ENCODE measurements at regions of chr2 and their contacts with region 1.

Region 1: GRCh38 chr2:9142551-9143263 is 63.9 kb upstream of the ASAP2 start:
- DNase-seq: peak; percentile 84 to 89
- H3K4me3 ChIP-seq: no peak overlapping the region
- H3K27ac ChIP-seq: peak overlapping the region in 2 of 3 donors; percentile 8 to 46
- H3K4me1 ChIP-seq: peaks cover 0 to 23% of the 10 kb centered on the region in 2 donors
- H3K27me3 ChIP-seq: no peaks in the 10 kb centered on the region
- CTCF ChIP-seq: peak; percentile 94 to 99 (median 98)
- POLR2A ChIP-seq: no peak

Region 2: DNA sequence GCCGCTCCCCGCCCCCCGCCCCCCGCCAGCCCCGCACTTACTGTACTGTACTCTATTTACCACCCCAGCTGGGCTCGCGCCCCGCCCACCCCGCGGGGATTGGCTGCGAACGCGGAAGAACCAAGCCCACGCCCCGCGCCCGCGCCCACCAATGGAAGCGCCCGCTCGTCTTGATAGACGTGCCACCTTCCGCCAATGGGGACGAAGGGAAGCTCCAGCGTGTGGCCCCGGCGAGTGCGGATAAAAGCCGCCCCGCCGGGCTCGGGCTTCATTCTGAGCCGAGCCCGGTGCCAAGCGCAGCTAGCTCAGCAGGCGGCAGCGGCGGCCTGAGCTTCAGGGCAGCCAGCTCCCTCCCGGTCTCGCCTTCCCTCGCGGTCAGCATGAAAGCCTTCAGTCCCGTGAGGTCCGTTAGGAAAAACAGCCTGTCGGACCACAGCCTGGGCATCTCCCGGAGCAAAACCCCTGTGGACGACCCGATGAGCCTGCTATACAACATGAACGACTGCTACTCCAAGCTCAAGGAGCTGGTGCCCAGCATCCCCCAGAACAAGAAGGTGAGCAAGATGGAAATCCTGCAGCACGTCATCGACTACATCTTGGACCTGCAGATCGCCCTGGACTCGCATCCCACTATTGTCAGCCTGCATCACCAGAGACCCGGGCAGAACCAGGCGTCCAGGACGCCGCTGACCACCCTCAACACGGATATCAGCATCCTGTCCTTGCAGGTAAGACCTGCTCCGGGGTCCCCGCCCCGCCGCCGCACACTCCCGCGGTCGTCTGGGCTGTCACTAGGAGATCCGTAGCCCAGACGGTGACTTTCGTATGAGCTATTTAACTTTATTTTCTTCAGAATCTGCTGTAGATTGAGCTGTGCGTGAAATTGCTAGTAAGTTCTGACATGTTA is 460.7 kb before region 1 on chr2 and contains the start of gene ID2:
- intact Hi-C with region 1: no loop called
- DNase-seq: peak; percentile 99
- H3K4me3 ChIP-seq: peak within 1 kb of the TSS; percentile 39 to 99 (median 73)
- H3K27ac ChIP-seq: peak within 1 kb of the TSS; percentile 99 to 100 (median 100)
- H3K4me1 ChIP-seq: peaks cover 23 to 27% of the 10 kb centered on the region in 2 donors
- H3K27me3 ChIP-seq: no peaks in the 10 kb centered on the region
- CTCF ChIP-seq: peak in 1 of 6 experiments; percentile 7
- POLR2A ChIP-seq: peak; percentile 100
- total RNA-seq, gene ID2: 226 to 298 (median 247) TPM

Region 3: DNA sequence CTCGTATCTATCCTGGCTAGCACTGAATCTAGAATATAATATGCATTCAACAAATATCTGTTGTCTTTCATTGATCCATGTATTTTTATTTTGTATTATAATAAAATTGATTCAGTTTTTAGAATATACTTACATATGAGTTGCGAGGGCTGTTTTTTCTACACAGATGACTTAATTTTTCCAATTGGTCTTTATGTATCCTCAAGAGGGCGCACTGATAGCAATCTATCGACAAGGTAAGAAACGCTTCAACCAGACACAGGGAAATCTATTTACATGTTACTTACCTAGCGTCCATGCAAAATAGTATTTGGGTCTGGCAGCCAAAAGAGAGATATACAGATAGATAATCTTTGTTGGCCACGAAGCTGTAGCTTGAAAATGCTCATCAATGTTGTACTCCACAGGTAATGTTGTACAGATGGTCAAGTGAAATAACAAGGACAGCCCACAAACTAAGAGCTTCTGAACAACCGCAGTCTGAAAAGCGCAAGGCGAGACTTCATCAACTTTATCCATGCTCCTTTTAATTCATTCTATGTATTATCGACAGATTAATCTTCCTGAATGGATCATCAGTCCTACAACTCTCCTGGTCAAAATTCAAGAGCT is 269.8 kb before region 1 on chr2:
- intact Hi-C with region 1: loop called (anchors 5 kb)
- DNase-seq: no peak
- H3K4me3 ChIP-seq: no peak overlapping the region
- H3K27ac ChIP-seq: no peak overlapping the region
- H3K4me1 ChIP-seq: no peaks in the 10 kb centered on the region
- H3K27me3 ChIP-seq: no peaks in the 10 kb centered on the region
- CTCF ChIP-seq: peak in 5 of 6 experiments; percentile 33 to 67 (median 61)
- POLR2A ChIP-seq: no peak

Region 4: GRCh38 chr2:9205963-9206948 is 63.5 kb after region 1 on chr2 and contains the start of gene ASAP2:
- intact Hi-C with region 1: loop called (anchors 5 kb)
- DNase-seq: peak; percentile 70 to 77
- H3K4me3 ChIP-seq: peak within 1 kb of the TSS; percentile 78 to 88 (median 86)
- H3K27ac ChIP-seq: peak within 1 kb of the TSS; percentile 93 to 95 (median 95)
- H3K4me1 ChIP-seq: peaks cover 11 to 27% of the 10 kb centered on the region in 2 donors
- H3K27me3 ChIP-seq: no peaks in the 10 kb centered on the region
- CTCF ChIP-seq: peak; percentile 48 to 86 (median 77)
- POLR2A ChIP-seq: peak in 1 of 2 donors; percentile 82
- total RNA-seq, gene ASAP2: 40.3 to 55.3 (median 47.3) TPM

Region 5: DNA sequence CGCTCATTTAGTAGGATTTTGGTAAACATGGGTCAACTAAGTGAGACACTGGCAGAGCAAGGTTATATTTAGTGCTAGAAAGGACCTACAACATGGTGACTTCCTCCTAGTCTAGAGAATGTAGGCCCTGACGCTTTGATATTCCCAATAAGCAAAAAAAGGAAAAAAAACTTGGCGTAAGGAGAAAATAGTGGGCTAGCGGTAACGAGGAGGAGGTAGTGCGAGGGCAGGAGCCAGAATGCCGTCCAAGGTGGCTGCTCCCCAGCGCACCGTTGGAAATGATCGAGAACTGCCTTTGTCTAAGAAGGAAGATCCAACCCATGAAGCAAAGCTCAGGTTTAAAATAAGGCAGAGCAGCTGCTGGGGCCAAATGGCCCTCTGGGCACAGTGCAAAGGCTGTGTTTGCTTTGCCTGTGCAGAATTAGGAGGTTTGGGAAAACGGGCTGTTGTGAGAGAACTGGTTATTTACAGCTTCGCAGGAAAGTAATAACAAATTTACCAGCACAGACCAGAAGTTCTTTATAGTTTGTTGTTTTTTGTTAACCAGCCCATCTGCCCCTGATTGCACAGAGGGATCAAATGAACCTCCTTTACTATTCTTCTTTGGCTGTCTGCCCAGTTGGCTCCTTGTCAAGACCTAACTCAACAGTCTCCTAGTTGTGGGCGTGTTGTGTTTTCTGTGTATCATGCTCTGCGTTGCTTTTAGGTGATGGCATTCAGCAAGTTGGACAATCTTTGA is 194.0 kb after region 1 on chr2:
- intact Hi-C with region 1: loop called (anchors 5 kb)
- DNase-seq: peak; percentile 91 to 92
- H3K4me3 ChIP-seq: no peak overlapping the region
- H3K27ac ChIP-seq: peak overlapping the region; percentile 57 to 72 (median 66)
- H3K4me1 ChIP-seq: peaks cover 39 to 58% of the 10 kb centered on the region in 2 donors
- H3K27me3 ChIP-seq: no peaks in the 10 kb centered on the region
- CTCF ChIP-seq: no peak
- POLR2A ChIP-seq: no peak